Activated T-helper 1 cell treated with anti-CD3 and anti-CD28 coated beads, Interleukin-12 subunit alpha, Interleukin-12 subunit beta, Interleukin-2, Interleukin-4 antibody, amounts not matched to agents 30 ng/mL and 10 ng/mL and 1 ng/mL, durations not matched to agents 14 hours and 24 hours and 36 hours (primary cell): ENCODE measurements at regions of chr12 and their contacts with region 1.

Region 1: GRCh38 chr12:93243689-93244513 is 133.8 kb upstream of the NUDT4 start:
- DNase-seq: peak; percentile 4
- H3K4me3 Mint-ChIP-seq: peak overlapping the region; percentile 63
- H3K27ac Mint-ChIP-seq: peak overlapping the region; percentile 69
- H3K4me1 Mint-ChIP-seq: peaks cover 59% of the 10 kb centered on the region
- H3K27me3 Mint-ChIP-seq: no peaks in the 10 kb centered on the region

Region 2: DNA sequence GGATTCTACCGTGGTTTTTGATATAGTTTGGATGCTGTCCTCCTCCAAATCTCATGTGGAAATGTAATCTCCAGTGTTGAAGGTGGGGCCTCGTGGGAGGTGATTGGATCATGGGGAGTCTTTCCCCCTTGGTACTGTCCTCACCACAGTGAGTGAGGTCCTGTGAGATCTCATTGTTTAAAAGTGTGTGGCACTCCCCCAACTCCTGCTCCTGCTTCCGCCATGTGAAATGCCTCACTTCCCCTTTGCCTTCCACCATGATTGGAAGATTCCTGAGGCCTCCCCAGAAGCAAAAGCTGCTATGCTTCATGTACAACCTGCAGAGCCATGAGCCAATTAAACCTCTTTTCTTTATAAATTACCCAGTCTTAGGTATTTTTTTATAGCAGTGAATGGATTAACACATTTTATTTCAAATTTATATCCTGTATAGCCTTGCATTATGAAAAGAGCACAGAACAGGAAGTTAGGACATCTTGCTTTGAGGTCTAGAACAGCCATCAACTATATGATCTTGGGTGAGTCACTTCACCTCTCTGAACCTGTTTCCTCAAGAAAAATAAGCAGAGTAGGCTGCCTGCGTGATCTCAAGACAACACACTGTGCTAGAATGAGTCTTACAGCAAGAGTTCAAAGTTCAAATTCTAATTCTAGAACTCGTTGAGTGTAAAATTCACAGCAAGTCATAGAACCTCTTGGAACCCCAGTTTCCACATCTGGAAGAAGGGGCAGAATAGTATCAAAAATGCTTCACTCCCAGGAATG is 153.9 kb before region 1 on chr12:
- intact Hi-C with region 1: loop called (anchors 1 kb)
- DNase-seq: no peak
- H3K4me3 Mint-ChIP-seq: no peak overlapping the region
- H3K27ac Mint-ChIP-seq: peak overlapping the region; percentile 42
- H3K4me1 Mint-ChIP-seq: peaks cover 23% of the 10 kb centered on the region
- H3K27me3 Mint-ChIP-seq: no peaks in the 10 kb centered on the region

Region 3: GRCh38 chr12:93167841-93168492 is 75.9 kb before region 1 on chr12:
- intact Hi-C with region 1: loop called (anchors 1 kb)
- DNase-seq: peak; percentile 6
- H3K4me3 Mint-ChIP-seq: peak overlapping the region; percentile 37
- H3K27ac Mint-ChIP-seq: peak overlapping the region; percentile 18
- H3K4me1 Mint-ChIP-seq: peaks cover 18% of the 10 kb centered on the region
- H3K27me3 Mint-ChIP-seq: peaks cover 2% of the 10 kb centered on the region

Region 4: GRCh38 chr12:93292741-93293566 is 49.1 kb after region 1 on chr12:
- intact Hi-C with region 1: no loop called
- DNase-seq: no peak
- H3K4me3 Mint-ChIP-seq: no peak overlapping the region
- H3K27ac Mint-ChIP-seq: no peak overlapping the region
- H3K4me1 Mint-ChIP-seq: no peaks in the 10 kb centered on the region
- H3K27me3 Mint-ChIP-seq: peaks cover 3% of the 10 kb centered on the region